ENCODE measurements at regions of chr6 and their contacts with region 1.

Region 1: GRCh38 chr6:25027221-25027916 is 91.6 kb upstream of the RIPOR2 start:
- DNase-seq: peak; percentile 83
- ATAC-seq: peak; percentile 95
- H3K4me3 ChIP-seq: peak overlapping the region in 4 of 5 experiments; percentile 14 to 56 (median 46)
- H3K4me3 Mint-ChIP-seq: peak overlapping the region; percentile 90
- H3K27ac ChIP-seq: peak overlapping the region; percentile 60 to 63
- H3K27ac Mint-ChIP-seq: peak overlapping the region; percentile 90
- H3K4me1 ChIP-seq: peaks cover 16 to 18% of the 10 kb centered on the region in 2 donors
- H3K4me1 Mint-ChIP-seq: peaks cover 40% of the 10 kb centered on the region
- H3K27me3 ChIP-seq: no peaks in the 10 kb centered on the region
- H3K27me3 Mint-ChIP-seq: no peaks in the 10 kb centered on the region
- CTCF ChIP-seq: peak; percentile 65

Region 2: GRCh38 chr6:24883618-24884017 is 143.8 kb before region 1 on chr6:
- CTCF ChIA-PET with region 1: interaction called, 14 read pairs
- POLR2A ChIA-PET with region 1: no interaction called
- intact Hi-C with region 1: no loop called
- DNase-seq: peak; percentile 27
- ATAC-seq: no peak
- H3K4me3 ChIP-seq: no peak overlapping the region
- H3K4me3 Mint-ChIP-seq: peak overlapping the region; percentile 76
- H3K27ac ChIP-seq: peak overlapping the region; percentile 26 to 84
- H3K27ac Mint-ChIP-seq: peak overlapping the region; percentile 87
- H3K4me1 ChIP-seq: peaks cover 69 to 74% of the 10 kb centered on the region in 2 donors
- H3K4me1 Mint-ChIP-seq: peaks cover 87% of the 10 kb centered on the region
- H3K27me3 ChIP-seq: no peaks in the 10 kb centered on the region
- H3K27me3 Mint-ChIP-seq: no peaks in the 10 kb centered on the region
- CTCF ChIP-seq: no peak

Region 3: DNA sequence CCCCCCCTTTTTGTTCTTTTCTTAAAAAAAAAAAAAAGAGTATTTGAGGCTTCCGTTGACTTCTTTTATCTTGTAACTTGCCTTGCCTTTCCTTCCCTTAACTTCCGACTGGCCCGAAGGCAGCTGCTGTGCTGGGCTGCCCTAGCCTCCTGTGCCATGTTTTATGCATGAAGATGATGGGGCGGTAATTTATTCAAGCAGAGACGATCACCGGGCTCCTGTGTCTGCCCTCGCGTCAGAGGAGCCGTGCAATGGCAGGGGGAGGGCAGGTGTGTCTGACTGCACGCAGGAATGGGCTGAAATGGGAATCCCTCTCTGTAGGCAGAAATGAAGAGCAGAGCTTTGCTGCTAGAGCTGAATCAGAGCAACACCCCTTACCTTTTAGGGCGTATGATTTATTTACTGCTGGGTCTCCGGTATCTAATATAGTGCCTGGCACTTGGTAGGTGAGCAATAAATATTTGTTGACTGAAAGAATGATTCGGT is 14.7 kb after region 1 on chr6:
- CTCF ChIA-PET with region 1: interaction called, 92 read pairs
- POLR2A ChIA-PET with region 1: interaction called, 6 read pairs
- intact Hi-C with region 1: loop called (anchors 2 kb)
- DNase-seq: peak; percentile 75
- ATAC-seq: peak; percentile 69
- H3K4me3 ChIP-seq: peak overlapping the region in 4 of 5 experiments; percentile 41 to 73 (median 66)
- H3K4me3 Mint-ChIP-seq: peak overlapping the region; percentile 91
- H3K27ac ChIP-seq: peak overlapping the region; percentile 50 to 90
- H3K27ac Mint-ChIP-seq: peak overlapping the region; percentile 96
- H3K4me1 ChIP-seq: peaks cover 58 to 63% of the 10 kb centered on the region in 2 donors
- H3K4me1 Mint-ChIP-seq: peaks cover 71% of the 10 kb centered on the region
- H3K27me3 ChIP-seq: no peaks in the 10 kb centered on the region
- H3K27me3 Mint-ChIP-seq: no peaks in the 10 kb centered on the region
- CTCF ChIP-seq: no peak

Region 4: GRCh38 chr6:25061289-25061936 is 34.0 kb after region 1 on chr6:
- CTCF ChIA-PET with region 1: interaction called, 88 read pairs
- POLR2A ChIA-PET with region 1: interaction called, 3 read pairs
- intact Hi-C with region 1: no loop called
- DNase-seq: no peak
- ATAC-seq: no peak
- H3K4me3 ChIP-seq: no peak overlapping the region
- H3K4me3 Mint-ChIP-seq: no peak overlapping the region
- H3K27ac ChIP-seq: no peak overlapping the region
- H3K27ac Mint-ChIP-seq: peak overlapping the region; percentile 26
- H3K4me1 ChIP-seq: peaks cover 19 to 24% of the 10 kb centered on the region in 2 donors
- H3K4me1 Mint-ChIP-seq: peaks cover 23% of the 10 kb centered on the region
- H3K27me3 ChIP-seq: no peaks in the 10 kb centered on the region
- H3K27me3 Mint-ChIP-seq: no peaks in the 10 kb centered on the region
- CTCF ChIP-seq: no peak

Region 5: GRCh38 chr6:25089442-25089841 is 62.1 kb after region 1 on chr6:
- CTCF ChIA-PET with region 1: interaction called, 10 read pairs
- POLR2A ChIA-PET with region 1: no interaction called
- intact Hi-C with region 1: no loop called
- DNase-seq: no peak
- ATAC-seq: no peak
- H3K4me3 ChIP-seq: no peak overlapping the region
- H3K4me3 Mint-ChIP-seq: no peak overlapping the region
- H3K27ac ChIP-seq: no peak overlapping the region
- H3K27ac Mint-ChIP-seq: no peak overlapping the region
- H3K4me1 ChIP-seq: peaks cover 19 to 23% of the 10 kb centered on the region in 2 donors
- H3K4me1 Mint-ChIP-seq: peaks cover 11% of the 10 kb centered on the region
- H3K27me3 ChIP-seq: no peaks in the 10 kb centered on the region
- H3K27me3 Mint-ChIP-seq: no peaks in the 10 kb centered on the region
- CTCF ChIP-seq: no peak

Measured in B cell (primary cell).